ENCODE measurements at regions of chr9 and their contacts with region 1.

Region 1: DNA sequence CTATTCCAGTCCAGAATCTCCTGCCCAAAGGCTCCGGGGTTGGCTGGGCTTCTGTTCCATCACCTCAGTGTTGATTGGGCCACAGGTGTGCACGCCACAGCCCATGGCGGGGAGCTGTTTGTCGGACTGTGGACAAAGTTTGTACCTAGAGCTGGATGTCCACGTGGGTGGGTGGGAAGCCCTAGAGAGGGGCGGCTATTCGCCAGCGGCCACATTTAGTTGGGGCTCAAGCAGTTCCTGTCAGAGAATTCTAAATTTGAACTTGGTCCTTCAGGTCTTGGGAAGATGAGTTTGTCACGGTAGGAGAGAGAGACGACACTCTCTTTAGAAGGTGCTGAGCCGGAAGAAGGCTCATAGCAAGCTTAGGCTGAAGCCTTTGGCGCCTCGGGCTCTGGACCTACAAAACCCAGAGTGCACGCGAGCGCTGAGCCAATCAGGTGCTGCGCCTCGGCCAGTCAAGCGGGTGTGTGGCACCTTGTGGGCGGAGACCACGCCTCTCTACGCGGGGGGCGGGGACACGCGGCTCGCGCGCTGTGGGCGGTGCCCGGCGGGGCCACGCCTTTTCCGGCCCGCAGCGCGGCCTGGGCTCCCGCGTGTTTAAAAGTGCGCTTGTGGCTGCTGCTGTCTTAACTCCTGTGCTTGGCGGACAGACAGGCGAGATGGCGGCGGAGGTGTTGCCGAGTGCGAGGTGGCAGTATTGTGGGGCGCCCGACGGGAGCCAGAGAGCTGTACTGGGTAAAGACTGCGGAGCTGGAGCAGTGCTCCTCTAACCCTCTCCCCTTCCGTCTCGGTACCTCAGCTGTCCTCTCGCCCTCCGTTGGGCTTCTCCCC is at the start of gene POLR1E:
- DNase-seq: peak; percentile 90 to 98 (median 96)
- ATAC-seq: peak; percentile 97
- H3K4me3 ChIP-seq: peak within 1 kb of the TSS; percentile 73 to 81
- H3K4me3 Mint-ChIP-seq: peak within 1 kb of the TSS; percentile 95
- H3K27ac ChIP-seq: peak within 1 kb of the TSS; percentile 72 to 80
- H3K27ac Mint-ChIP-seq: peak within 1 kb of the TSS; percentile 95
- H3K4me1 ChIP-seq: peaks cover 26% of the 10 kb centered on the region
- H3K4me1 Mint-ChIP-seq: peaks cover 45% of the 10 kb centered on the region
- H3K27me3 ChIP-seq: peaks cover 0 to 4% of the 10 kb centered on the region in 2 experiments
- H3K27me3 Mint-ChIP-seq: peaks cover 7% of the 10 kb centered on the region
- CTCF ChIP-seq: no peak
- total RNA-seq, gene POLR1E: 27.2 to 27.8 TPM

Region 2: DNA sequence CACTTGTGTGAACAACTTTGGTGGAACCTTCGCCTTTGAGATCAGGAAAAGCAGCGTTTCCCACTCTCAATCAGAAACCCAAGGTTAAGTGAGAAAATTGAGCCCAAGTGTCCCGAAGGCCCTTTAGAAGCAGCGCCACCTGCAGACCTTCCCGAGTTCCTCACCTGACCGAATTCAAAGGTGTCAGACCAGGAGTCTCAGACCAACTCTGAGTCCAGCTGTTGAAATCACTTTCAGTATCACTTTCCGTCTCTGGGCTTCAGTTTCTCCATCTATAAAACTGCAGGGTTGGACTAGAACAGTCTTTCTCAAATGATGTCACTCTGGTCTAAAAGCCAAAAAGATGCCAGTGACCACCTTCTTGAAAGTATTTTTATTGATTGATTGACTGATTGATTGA is 94.8 kb before region 1 on chr9:
- CTCF ChIA-PET with region 1: no interaction called
- POLR2A ChIA-PET with region 1: no interaction called
- intact Hi-C with region 1: no loop called
- DNase-seq: peak in 4 of 9 experiments; percentile 15 to 51 (median 32)
- ATAC-seq: no peak
- H3K4me3 ChIP-seq: no peak overlapping the region
- H3K4me3 Mint-ChIP-seq: no peak overlapping the region
- H3K27ac ChIP-seq: no peak overlapping the region
- H3K27ac Mint-ChIP-seq: no peak overlapping the region
- H3K4me1 ChIP-seq: no peaks in the 10 kb centered on the region
- H3K4me1 Mint-ChIP-seq: peaks cover 3% of the 10 kb centered on the region
- H3K27me3 ChIP-seq: no peaks in the 10 kb centered on the region
- H3K27me3 Mint-ChIP-seq: no peaks in the 10 kb centered on the region
- CTCF ChIP-seq: peak; percentile 18

Region 3: DNA sequence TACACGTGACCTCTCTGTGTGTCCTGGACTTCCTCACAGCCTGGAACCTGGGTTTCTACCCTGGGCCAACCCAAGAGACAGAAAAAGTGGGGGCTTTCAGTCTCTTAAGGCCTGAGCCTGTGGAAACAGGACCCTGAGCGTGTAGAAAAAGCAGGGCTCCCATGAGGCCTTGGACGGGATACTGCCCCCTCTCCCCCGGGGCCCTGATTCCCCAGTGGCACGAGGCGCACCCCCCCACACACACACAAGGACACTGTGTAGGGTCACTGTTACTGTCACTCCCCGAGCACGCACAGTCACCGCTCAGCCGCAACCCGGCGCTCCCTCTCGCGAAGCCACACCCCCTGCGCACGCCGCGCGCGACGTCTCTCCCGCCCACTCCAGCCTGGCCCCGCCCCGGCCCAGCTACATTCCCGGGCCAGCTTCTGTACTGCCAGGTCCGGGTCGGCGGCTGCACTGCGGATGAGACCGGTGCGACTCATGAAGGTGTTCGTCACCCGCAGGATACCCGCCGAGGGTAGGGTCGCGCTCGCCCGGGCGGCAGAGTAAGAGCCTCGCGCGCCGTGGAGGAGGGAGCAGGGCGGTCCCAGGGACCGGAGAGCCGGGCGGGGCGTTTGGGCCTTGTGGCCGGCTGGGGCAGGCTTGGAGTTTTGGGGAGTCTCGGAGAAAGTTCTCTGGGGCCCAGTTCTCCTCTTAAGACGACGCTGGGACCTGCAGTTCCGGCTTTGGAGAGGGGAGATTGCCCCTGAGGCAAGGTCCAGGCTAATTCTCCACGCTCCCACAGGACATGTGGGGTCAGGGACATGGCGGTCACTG is 63.1 kb before region 1 on chr9 and contains the start of gene GRHPR:
- CTCF ChIA-PET with region 1: interaction called, 3 read pairs
- POLR2A ChIA-PET with region 1: no interaction called
- intact Hi-C with region 1: loop called (anchors 1 kb)
- DNase-seq: peak; percentile 73 to 94 (median 88)
- ATAC-seq: peak; percentile 98
- H3K4me3 ChIP-seq: peak within 1 kb of the TSS; percentile 90 to 96
- H3K4me3 Mint-ChIP-seq: peak within 1 kb of the TSS; percentile 96
- H3K27ac ChIP-seq: peak within 1 kb of the TSS; percentile 76 to 82
- H3K27ac Mint-ChIP-seq: peak within 1 kb of the TSS; percentile 93
- H3K4me1 ChIP-seq: peaks cover 20% of the 10 kb centered on the region
- H3K4me1 Mint-ChIP-seq: peaks cover 28% of the 10 kb centered on the region
- H3K27me3 ChIP-seq: no peaks in the 10 kb centered on the region
- H3K27me3 Mint-ChIP-seq: no peaks in the 10 kb centered on the region
- CTCF ChIP-seq: no peak
- total RNA-seq, gene GRHPR: 25.5 to 25.8 TPM

Region 4: DNA sequence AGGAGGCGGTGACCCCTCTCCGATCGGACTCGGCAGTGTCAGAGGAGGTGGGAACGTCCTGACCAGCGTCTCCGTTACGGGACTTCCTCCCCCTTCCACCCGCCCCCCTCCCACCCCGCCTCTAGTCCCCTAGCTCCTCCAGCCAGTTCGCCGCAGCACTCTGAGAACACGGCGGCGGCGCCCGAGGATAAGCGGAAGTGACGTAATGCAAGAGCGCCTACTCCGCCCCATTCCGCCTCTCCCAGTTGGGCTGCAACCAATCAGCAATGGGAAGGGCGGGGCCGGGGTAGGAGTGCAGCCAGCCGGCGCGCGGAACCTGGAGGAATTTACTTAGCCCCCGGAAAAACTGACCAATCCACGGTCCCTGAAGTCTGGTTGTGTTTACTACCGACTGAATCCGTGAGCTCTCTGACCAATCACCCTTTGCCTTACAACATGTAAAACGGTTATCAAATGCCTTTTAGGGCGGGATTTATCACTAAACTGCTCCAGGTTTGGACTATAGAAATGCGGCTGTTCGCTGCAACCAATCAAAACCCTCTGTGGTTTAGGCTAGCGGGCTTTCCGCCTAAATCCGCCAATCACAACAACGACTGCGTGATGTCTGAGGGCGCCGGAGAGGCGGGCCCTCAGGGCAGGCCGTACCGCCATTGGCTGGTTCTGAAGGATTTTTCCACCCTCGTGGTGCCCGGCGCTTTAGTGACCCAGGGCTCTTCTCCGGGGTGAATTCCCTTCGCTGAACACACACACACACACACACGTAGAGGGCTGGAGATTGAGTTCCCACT is 20.2 kb before region 1 on chr9 and contains the start of gene ZBTB5:
- CTCF ChIA-PET with region 1: interaction called, 6 read pairs
- POLR2A ChIA-PET with region 1: interaction called, 18 read pairs
- intact Hi-C with region 1: loop called (anchors 1 kb)
- DNase-seq: peak; percentile 97 to 100 (median 99)
- ATAC-seq: peak; percentile 79
- H3K4me3 ChIP-seq: peak within 1 kb of the TSS; percentile 91 to 97
- H3K4me3 Mint-ChIP-seq: peak within 1 kb of the TSS; percentile 95
- H3K27ac ChIP-seq: peak within 1 kb of the TSS; percentile 86 to 97
- H3K27ac Mint-ChIP-seq: peak within 1 kb of the TSS; percentile 98
- H3K4me1 ChIP-seq: peaks cover 23% of the 10 kb centered on the region
- H3K4me1 Mint-ChIP-seq: peaks cover 40% of the 10 kb centered on the region
- H3K27me3 ChIP-seq: no peaks in the 10 kb centered on the region
- H3K27me3 Mint-ChIP-seq: no peaks in the 10 kb centered on the region
- CTCF ChIP-seq: no peak
- total RNA-seq, gene ZBTB5: 18.5 to 18.7 TPM

Region 5: GRCh38 chr9:37903647-37904444 is 418.2 kb after region 1 on chr9 and contains the start of gene SLC25A51:
- CTCF ChIA-PET with region 1: no interaction called
- POLR2A ChIA-PET with region 1: no interaction called
- intact Hi-C with region 1: loop called (anchors 5 kb)
- DNase-seq: peak; percentile 94 to 99 (median 96)
- ATAC-seq: peak; percentile 87
- H3K4me3 ChIP-seq: peak within 1 kb of the TSS; percentile 65 to 89
- H3K4me3 Mint-ChIP-seq: peak within 1 kb of the TSS; percentile 91
- H3K27ac ChIP-seq: peak within 1 kb of the TSS; percentile 62 to 73
- H3K27ac Mint-ChIP-seq: peak within 1 kb of the TSS; percentile 94
- H3K4me1 ChIP-seq: peaks cover 22% of the 10 kb centered on the region
- H3K4me1 Mint-ChIP-seq: peaks cover 30% of the 10 kb centered on the region
- H3K27me3 ChIP-seq: no peaks in the 10 kb centered on the region
- H3K27me3 Mint-ChIP-seq: no peaks in the 10 kb centered on the region
- CTCF ChIP-seq: peak; percentile 86
- total RNA-seq, gene SLC25A51: 14.7 to 15.2 TPM

Measured in CD8-positive, alpha-beta T cell (primary cell).